ENCODE measurements at regions of chr6 and their contacts with region 1.

Region 1: GRCh38 chr6:166313255-166314070 is 5.3 kb upstream of the PRR18 start:
- DNase-seq: no peak
- ATAC-seq: peak; percentile 88
- H3K4me3 Mint-ChIP-seq: no peak overlapping the region
- H3K27ac Mint-ChIP-seq: no peak overlapping the region
- H3K4me1 Mint-ChIP-seq: peaks cover 6% of the 10 kb centered on the region
- H3K27me3 Mint-ChIP-seq: peaks cover 17% of the 10 kb centered on the region
- CTCF ChIP-seq: no peak

Region 2: DNA sequence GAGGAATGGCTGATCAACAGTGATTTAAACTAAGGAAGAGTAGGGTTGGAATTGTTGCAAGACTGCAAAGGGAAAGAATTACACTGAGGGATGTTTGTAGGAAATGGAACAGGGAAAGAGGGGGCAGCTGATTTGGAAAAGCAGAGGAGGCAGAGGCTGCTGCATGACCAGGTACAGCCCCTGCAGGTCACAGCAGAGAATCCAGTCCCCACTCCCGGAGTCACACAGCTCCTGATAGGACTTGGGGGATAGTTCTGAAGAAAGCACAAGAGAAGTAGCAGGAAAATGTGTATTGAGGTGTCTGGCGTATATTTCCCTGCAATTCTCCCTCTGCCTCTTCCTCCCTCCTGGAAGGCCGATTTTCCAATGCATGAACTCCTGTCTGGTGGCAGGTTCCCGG is 557.9 kb before region 1 on chr6:
- CTCF ChIA-PET with region 1: no interaction called
- POLR2A ChIA-PET with region 1: no interaction called
- intact Hi-C with region 1: no loop called
- DNase-seq: no peak
- ATAC-seq: no peak
- H3K4me3 Mint-ChIP-seq: no peak overlapping the region
- H3K27ac Mint-ChIP-seq: no peak overlapping the region
- H3K4me1 Mint-ChIP-seq: no peaks in the 10 kb centered on the region
- H3K27me3 Mint-ChIP-seq: no peaks in the 10 kb centered on the region
- CTCF ChIP-seq: no peak

Region 3: GRCh38 chr6:165922309-165922794 is 391.1 kb before region 1 on chr6:
- CTCF ChIA-PET with region 1: no interaction called
- POLR2A ChIA-PET with region 1: no interaction called
- intact Hi-C with region 1: no loop called
- DNase-seq: no peak
- ATAC-seq: no peak
- H3K4me3 Mint-ChIP-seq: no peak overlapping the region
- H3K27ac Mint-ChIP-seq: no peak overlapping the region
- H3K4me1 Mint-ChIP-seq: no peaks in the 10 kb centered on the region
- H3K27me3 Mint-ChIP-seq: peaks cover 8% of the 10 kb centered on the region
- CTCF ChIP-seq: no peak

Region 4: GRCh38 chr6:166281104-166281503 is 32.4 kb before region 1 on chr6:
- CTCF ChIA-PET with region 1: interaction called, 11 read pairs
- POLR2A ChIA-PET with region 1: no interaction called
- intact Hi-C with region 1: no loop called
- DNase-seq: no peak
- ATAC-seq: no peak
- H3K4me3 Mint-ChIP-seq: no peak overlapping the region
- H3K27ac Mint-ChIP-seq: no peak overlapping the region
- H3K4me1 Mint-ChIP-seq: peaks cover 10% of the 10 kb centered on the region
- H3K27me3 Mint-ChIP-seq: peaks cover 11% of the 10 kb centered on the region
- CTCF ChIP-seq: no peak

Region 5: DNA sequence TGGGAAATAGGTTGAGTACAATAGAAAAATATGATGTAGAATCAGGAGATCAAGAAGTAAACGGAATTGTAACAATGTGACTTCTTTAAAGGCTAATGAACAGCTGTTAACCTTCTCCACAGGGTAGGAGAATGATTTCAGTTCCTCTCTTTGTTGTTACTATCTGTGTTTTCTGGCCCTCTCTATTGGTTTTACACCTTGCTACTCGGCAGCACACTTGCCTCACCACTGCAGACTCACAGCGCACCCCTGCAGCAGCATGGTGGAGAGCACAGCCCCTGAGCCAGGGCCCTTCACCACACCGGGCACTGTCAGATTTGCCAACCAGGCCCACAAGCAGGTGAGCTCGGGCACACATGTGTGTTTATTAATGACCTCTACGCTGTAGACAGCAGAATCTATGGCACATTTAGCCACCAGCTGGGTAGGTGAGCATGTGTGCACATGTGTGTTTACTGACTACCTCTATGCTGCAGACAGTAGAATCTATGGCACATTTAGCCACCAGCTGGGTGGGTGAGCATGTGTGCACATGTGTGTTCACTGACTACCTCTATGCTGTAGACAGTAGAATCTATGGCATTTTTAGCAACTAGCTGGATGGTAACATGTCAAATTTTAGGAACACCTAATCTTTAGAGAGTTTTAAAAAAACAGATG is 12.1 kb after region 1 on chr6:
- CTCF ChIA-PET with region 1: interaction called, 4 read pairs
- POLR2A ChIA-PET with region 1: no interaction called
- intact Hi-C with region 1: loop called (anchors 2 kb)
- DNase-seq: no peak
- ATAC-seq: peak; percentile 25
- H3K4me3 Mint-ChIP-seq: no peak overlapping the region
- H3K27ac Mint-ChIP-seq: no peak overlapping the region
- H3K4me1 Mint-ChIP-seq: peaks cover 15% of the 10 kb centered on the region
- H3K27me3 Mint-ChIP-seq: no peaks in the 10 kb centered on the region
- CTCF ChIP-seq: no peak

Region 6: DNA sequence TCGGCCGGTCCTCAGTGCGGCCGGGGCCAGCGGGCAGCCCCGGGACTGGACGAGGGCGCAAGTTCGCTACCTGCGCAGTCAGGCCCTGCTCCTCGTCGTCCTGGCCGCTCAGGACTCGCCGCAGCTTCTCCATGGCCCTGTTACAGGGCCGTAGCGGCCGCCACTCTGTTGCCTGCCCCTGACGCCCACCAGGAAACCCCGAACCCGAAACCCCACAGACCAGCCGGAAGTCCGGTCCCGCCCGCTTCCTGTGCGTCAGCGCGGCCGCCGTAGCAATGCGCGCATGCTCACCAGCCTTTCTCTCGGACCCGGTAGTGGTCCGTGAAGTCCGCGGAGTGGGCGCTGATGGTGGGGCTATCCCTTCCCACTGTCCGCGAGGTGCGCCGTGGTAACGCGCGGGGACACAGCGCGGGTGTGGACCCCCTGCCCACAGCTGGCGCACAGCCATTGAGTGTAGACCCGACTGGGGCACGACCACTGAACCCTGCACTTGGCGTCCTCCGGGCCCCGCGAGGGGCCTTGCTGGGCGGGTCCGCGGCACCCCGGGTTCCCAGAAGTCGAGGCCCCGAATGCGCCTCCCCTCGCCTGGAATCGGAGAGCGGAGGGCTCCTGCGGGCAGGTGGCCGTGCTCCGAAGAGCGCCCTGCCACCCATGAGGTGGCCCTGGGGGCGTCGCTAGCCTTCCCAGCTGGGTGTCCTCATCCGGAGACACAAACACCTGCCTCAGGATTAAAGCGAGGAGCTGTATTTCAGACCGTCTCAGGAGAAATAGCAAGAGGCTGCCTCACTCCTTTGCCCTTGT is 29.1 kb after region 1 on chr6 and contains the start of gene SFT2D1:
- CTCF ChIA-PET with region 1: interaction called, 5 read pairs
- POLR2A ChIA-PET with region 1: interaction called, 8 read pairs
- intact Hi-C with region 1: loop called (anchors 2 kb)
- DNase-seq: peak; percentile 84
- ATAC-seq: peak; percentile 77
- H3K4me3 Mint-ChIP-seq: peak within 1 kb of the TSS; percentile 92
- H3K27ac Mint-ChIP-seq: peak within 1 kb of the TSS; percentile 89
- H3K4me1 Mint-ChIP-seq: peaks cover 16% of the 10 kb centered on the region
- H3K27me3 Mint-ChIP-seq: no peaks in the 10 kb centered on the region
- CTCF ChIP-seq: no peak
- total RNA-seq, gene SFT2D1: 44.6 and 49.5 TPM in 2 replicates

Region 7: GRCh38 chr6:166382933-166383801 is 69.7 kb after region 1 on chr6 and contains the start of gene MPC1:
- CTCF ChIA-PET with region 1: interaction called, 31 read pairs
- POLR2A ChIA-PET with region 1: interaction called, 3 read pairs
- intact Hi-C with region 1: loop called (anchors 1 kb)
- DNase-seq: peak; percentile 96
- ATAC-seq: peak; percentile 94
- H3K4me3 Mint-ChIP-seq: peak within 1 kb of the TSS; percentile 92
- H3K27ac Mint-ChIP-seq: peak within 1 kb of the TSS; percentile 76
- H3K4me1 Mint-ChIP-seq: peaks cover 15% of the 10 kb centered on the region
- H3K27me3 Mint-ChIP-seq: no peaks in the 10 kb centered on the region
- CTCF ChIP-seq: no peak
- total RNA-seq, gene MPC1: 16.7 and 17.3 TPM in 2 replicates

Region 8: DNA sequence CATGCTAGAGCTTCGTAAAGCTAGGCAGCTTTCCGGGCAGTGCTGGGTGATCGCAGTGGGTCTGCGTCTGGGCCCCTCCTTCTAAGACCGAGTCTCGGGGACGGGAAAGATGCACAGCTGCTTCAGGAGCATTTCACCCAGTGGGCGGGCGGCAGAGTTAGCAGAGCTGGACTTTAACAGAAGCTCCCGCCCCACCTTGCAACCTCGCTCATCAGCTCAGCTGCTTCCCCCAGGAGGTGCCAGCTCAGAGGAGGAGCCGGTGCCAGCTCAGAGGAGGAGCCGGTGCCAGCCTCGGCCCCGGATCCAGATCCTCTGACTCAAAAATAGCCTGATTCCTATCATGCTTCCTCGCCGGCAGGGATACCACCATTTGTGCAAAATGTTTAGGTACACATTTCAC is 408.1 kb after region 1 on chr6:
- CTCF ChIA-PET with region 1: no interaction called
- POLR2A ChIA-PET with region 1: no interaction called
- intact Hi-C with region 1: no loop called
- DNase-seq: no peak
- ATAC-seq: no peak
- H3K4me3 Mint-ChIP-seq: no peak overlapping the region
- H3K27ac Mint-ChIP-seq: no peak overlapping the region
- H3K4me1 Mint-ChIP-seq: no peaks in the 10 kb centered on the region
- H3K27me3 Mint-ChIP-seq: no peaks in the 10 kb centered on the region
- CTCF ChIP-seq: no peak

Measured in activated B cell treated with CpG ODN at 0.5 μM for 24 hours (primary cell).